Mammary epithelial cell (primary cell): ENCODE measurements at regions of chr18 and their contacts with region 1.

Region 1: DNA sequence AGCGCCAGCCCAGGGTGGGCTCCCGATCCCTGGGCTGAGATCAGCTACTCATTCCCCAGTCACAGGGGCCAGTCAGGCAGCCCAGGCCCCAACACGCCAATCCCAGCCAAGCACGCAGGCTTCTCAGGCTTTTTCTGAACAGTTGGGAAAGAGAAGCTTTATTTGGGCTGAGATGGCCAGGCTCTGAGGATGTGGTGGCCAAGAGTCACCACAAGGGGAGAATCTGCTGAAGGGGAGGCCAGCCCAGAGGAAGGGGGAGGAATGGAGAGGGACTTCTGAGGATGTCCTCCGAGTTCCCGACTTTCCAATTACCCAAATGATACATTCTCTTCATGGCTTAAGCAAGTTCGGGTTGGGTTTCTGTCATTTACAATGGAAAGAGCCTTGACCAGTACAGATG is 2.8 kb upstream of the DIPK1C start:
- DNase-seq: no peak
- H3K4me3 ChIP-seq: no peak overlapping the region
- H3K27ac ChIP-seq: no peak overlapping the region
- H3K4me1 ChIP-seq: peaks cover 6% of the 10 kb centered on the region
- H3K27me3 ChIP-seq: peaks cover 33% of the 10 kb centered on the region
- CTCF ChIP-seq: no peak

Region 2: GRCh38 chr18:74097598-74098202 is 362.2 kb before region 1 on chr18:
- CTCF ChIA-PET with region 1: no interaction called
- dilution Hi-C with region 1: no loop called
- in situ Hi-C with region 1: no loop called
- intact Hi-C with region 1: no loop called
- DNase-seq: no peak
- H3K4me3 ChIP-seq: no peak overlapping the region
- H3K27ac ChIP-seq: no peak overlapping the region
- H3K4me1 ChIP-seq: no peaks in the 10 kb centered on the region
- H3K27me3 ChIP-seq: no peaks in the 10 kb centered on the region
- CTCF ChIP-seq: no peak

Region 3: DNA sequence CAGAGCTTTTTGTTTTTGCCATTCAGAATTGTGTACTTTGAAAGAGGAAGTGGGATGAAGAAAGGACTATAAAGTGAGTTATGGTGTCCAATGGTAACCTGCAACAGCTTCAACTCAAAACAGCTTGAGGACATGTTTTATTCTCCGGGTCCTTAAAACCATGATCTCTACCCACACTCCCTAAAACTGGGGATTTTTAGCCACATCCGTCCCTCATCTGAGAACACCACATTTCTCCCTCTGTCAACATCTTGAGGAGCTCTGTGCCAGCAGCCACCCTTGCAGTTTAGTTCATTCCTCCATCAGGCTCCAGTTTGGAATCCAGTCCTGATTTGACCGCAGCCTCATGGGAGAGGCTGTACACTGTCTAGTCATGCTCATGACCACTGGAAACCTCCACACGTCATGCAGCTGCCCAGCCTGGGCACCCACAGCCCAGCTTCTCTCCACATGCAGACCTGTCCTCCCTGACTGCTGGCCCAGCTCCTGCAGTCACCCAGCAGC is 81.7 kb before region 1 on chr18:
- CTCF ChIA-PET with region 1: no interaction called
- dilution Hi-C with region 1: loop called (anchors 5 kb)
- in situ Hi-C with region 1: no loop called
- intact Hi-C with region 1: no loop called
- DNase-seq: no peak
- H3K4me3 ChIP-seq: no peak overlapping the region
- H3K27ac ChIP-seq: no peak overlapping the region
- H3K4me1 ChIP-seq: no peaks in the 10 kb centered on the region
- H3K27me3 ChIP-seq: no peaks in the 10 kb centered on the region
- CTCF ChIP-seq: no peak

Region 4: DNA sequence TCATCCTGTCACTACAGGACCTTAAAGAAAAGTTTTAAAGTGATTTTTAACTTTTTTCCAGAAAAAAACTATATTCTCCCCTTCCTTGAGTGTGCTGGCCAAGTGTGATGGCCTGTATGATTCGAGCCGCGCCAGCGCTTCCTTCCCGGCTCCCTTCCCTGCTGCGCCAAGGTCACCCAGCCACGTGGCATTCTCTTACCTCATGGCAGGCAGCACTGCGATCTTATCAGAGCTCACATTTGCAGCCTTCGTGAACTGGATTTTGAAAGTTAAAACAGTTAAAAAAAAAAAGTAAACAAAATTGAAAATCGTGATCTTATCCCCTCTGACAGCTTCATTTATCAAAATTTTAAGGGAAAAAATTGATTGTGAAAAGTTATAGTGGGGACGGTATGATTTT is 469.2 kb after region 1 on chr18:
- CTCF ChIA-PET with region 1: no interaction called
- dilution Hi-C with region 1: no loop called
- in situ Hi-C with region 1: no loop called
- intact Hi-C with region 1: no loop called
- DNase-seq: no peak
- H3K4me3 ChIP-seq: no peak overlapping the region
- H3K27ac ChIP-seq: no peak overlapping the region
- H3K4me1 ChIP-seq: no peaks in the 10 kb centered on the region
- H3K27me3 ChIP-seq: no peaks in the 10 kb centered on the region
- CTCF ChIP-seq: no peak